CD4-positive, alpha-beta memory T cell (primary cell): ENCODE measurements at regions of chr22 and their contacts with region 1.

Region 1: GRCh38 chr22:44701824-44702478 is at the start of gene PRR5:
- DNase-seq: peak; percentile 83 to 89 (median 86)
- H3K4me3 ChIP-seq: peak within 1 kb of the TSS in 1 of 2 donors; percentile 47
- H3K4me3 Mint-ChIP-seq: peak within 1 kb of the TSS; percentile 71 to 87 (median 78)
- H3K27ac ChIP-seq: peak within 1 kb of the TSS; percentile 42
- H3K27ac Mint-ChIP-seq: peak within 1 kb of the TSS; percentile 84 to 95 (median 91)
- H3K4me1 ChIP-seq: peaks cover 27% of the 10 kb centered on the region
- H3K4me1 Mint-ChIP-seq: peaks cover 6 to 40% (median 21%) of the 10 kb centered on the region in 4 donors
- H3K27me3 ChIP-seq: no peaks in the 10 kb centered on the region
- H3K27me3 Mint-ChIP-seq: no peaks in the 10 kb centered on the region
- total RNA-seq, gene PRR5: 45.9 to 46.5 TPM

Region 2: GRCh38 chr22:43955040-43955882 is 746.7 kb before region 1 on chr22 and contains the start of gene SAMM50:
- CTCF ChIA-PET with region 1: no interaction called
- POLR2A ChIA-PET with region 1: no interaction called
- intact Hi-C with region 1: loop called (anchors 5 kb)
- DNase-seq: peak; percentile 86 to 93 (median 89)
- H3K4me3 ChIP-seq: peak within 1 kb of the TSS; percentile 76 to 81
- H3K4me3 Mint-ChIP-seq: peak within 1 kb of the TSS; percentile 90 to 99 (median 98)
- H3K27ac ChIP-seq: peak within 1 kb of the TSS; percentile 63
- H3K27ac Mint-ChIP-seq: peak within 1 kb of the TSS; percentile 87 to 98 (median 95)
- H3K4me1 ChIP-seq: peaks cover 25% of the 10 kb centered on the region
- H3K4me1 Mint-ChIP-seq: peaks cover 29 to 52% (median 37%) of the 10 kb centered on the region in 4 donors
- H3K27me3 ChIP-seq: no peaks in the 10 kb centered on the region
- H3K27me3 Mint-ChIP-seq: peaks cover 0 to 3% of the 10 kb centered on the region in 2 donors
- total RNA-seq, gene SAMM50: 33.3 to 34.7 TPM

Region 3: DNA sequence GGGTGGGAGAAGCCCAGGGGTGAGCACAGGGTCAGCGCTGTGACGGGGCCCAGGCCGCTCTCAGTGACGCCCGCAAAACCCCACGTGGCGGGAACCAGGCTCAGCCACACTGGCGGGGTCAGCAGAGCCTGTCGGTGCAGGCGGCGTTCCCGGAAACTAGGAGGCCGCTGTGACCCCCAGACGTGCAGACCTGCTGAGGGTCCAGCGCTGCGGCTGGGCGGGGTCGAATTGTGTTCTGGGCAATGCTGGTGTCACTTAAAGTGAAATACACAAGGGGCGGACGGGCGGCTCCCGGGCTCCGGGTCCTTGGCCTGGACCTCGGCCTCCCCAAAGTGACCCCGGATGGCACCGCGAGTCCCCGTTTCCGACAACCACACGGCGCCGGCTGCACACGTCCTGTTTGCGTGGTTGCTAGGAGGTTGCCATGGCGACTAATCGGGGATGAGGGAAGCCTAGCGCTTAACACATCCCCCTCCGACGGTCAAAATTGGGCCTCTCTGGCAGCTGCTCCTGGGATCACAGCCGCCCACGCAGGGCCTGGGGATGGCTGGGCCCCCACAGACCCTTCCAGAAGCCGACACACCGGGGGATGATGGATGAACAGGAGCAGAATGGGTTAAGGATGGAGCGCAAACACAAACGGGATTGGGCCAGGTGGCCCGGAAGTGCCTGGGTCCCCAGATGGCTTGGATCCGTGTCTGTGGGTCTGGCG is 81.7 kb before region 1 on chr22:
- CTCF ChIA-PET with region 1: no interaction called
- POLR2A ChIA-PET with region 1: no interaction called
- intact Hi-C with region 1: no loop called
- DNase-seq: peak; percentile 85 to 92 (median 91)
- H3K4me3 ChIP-seq: peak overlapping the region in 1 of 2 donors; percentile 7
- H3K4me3 Mint-ChIP-seq: peak overlapping the region in 1 of 8 donors; percentile 67
- H3K27ac ChIP-seq: peak overlapping the region; percentile 14
- H3K27ac Mint-ChIP-seq: peak overlapping the region in 1 of 7 donors; percentile 96
- H3K4me1 ChIP-seq: peaks cover 15% of the 10 kb centered on the region
- H3K4me1 Mint-ChIP-seq: peaks cover 4 to 11% (median 6%) of the 10 kb centered on the region in 4 donors
- H3K27me3 ChIP-seq: no peaks in the 10 kb centered on the region
- H3K27me3 Mint-ChIP-seq: no peaks in the 10 kb centered on the region

Region 4: DNA sequence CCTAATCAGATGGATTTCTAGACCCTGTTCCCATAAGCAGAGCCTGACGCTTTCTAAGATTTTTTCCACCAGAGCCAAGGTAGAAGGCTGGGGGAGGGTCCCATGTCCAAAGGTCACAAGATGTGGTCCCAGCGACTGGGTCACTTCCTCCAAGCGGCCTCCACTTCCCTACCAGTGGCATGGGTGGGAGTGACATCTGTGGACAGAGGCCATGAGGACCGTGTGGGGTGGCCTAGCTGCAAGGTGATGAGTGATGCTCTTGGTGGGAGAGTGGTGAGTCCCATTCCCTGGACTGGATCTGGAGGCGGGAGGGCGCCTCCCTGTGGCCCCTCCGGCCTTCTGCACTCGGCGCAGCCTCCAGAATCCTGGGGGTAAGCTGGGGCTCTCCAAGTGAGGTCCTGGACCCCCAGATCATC is 32.4 kb before region 1 on chr22:
- CTCF ChIA-PET with region 1: no interaction called
- POLR2A ChIA-PET with region 1: no interaction called
- intact Hi-C with region 1: loop called (anchors 5 kb)
- DNase-seq: no peak
- H3K4me3 ChIP-seq: peak overlapping the region; percentile 42 to 49
- H3K4me3 Mint-ChIP-seq: peak overlapping the region; percentile 61 to 78 (median 72)
- H3K27ac ChIP-seq: peak overlapping the region; percentile 49
- H3K27ac Mint-ChIP-seq: peak overlapping the region in 6 of 7 donors; percentile 15 to 72 (median 45)
- H3K4me1 ChIP-seq: peaks cover 58% of the 10 kb centered on the region
- H3K4me1 Mint-ChIP-seq: peaks cover 24 to 67% (median 48%) of the 10 kb centered on the region in 4 donors
- H3K27me3 ChIP-seq: no peaks in the 10 kb centered on the region
- H3K27me3 Mint-ChIP-seq: no peaks in the 10 kb centered on the region

Region 5: GRCh38 chr22:44735540-44736488 is 33.9 kb after region 1 on chr22:
- CTCF ChIA-PET with region 1: interaction called, 91 read pairs
- POLR2A ChIA-PET with region 1: interaction called, 3 read pairs
- intact Hi-C with region 1: no loop called
- DNase-seq: peak; percentile 66 to 77 (median 69)
- H3K4me3 ChIP-seq: no peak overlapping the region
- H3K4me3 Mint-ChIP-seq: no peak overlapping the region
- H3K27ac ChIP-seq: no peak overlapping the region
- H3K27ac Mint-ChIP-seq: peak overlapping the region in 1 of 7 donors; percentile 35
- H3K4me1 ChIP-seq: no peaks in the 10 kb centered on the region
- H3K4me1 Mint-ChIP-seq: peaks cover 0 to 5% (median 2%) of the 10 kb centered on the region in 4 donors
- H3K27me3 ChIP-seq: no peaks in the 10 kb centered on the region
- H3K27me3 Mint-ChIP-seq: no peaks in the 10 kb centered on the region